ENCODE measurements at regions of chr16 and their contacts with region 1.

Region 1: GRCh38 chr16:25390761-25391160 is 133.1 kb upstream of the ZKSCAN2 start:
- DNase-seq: no peak
- ATAC-seq: no peak
- H3K4me3 ChIP-seq: no peak overlapping the region
- H3K27ac ChIP-seq: no peak overlapping the region
- H3K4me1 ChIP-seq: no peaks in the 10 kb centered on the region
- H3K27me3 ChIP-seq: no peaks in the 10 kb centered on the region
- CTCF ChIP-seq: no peak
- POLR2A ChIP-seq: no peak

Region 2: GRCh38 chr16:25443994-25444393 is 53.2 kb after region 1 on chr16:
- intact Hi-C with region 1: loop called in 1 of 10 experiments (anchors 10 kb)
- DNase-seq: no peak
- ATAC-seq: no peak
- H3K4me3 ChIP-seq: no peak overlapping the region
- H3K27ac ChIP-seq: no peak overlapping the region
- H3K4me1 ChIP-seq: no peaks in the 10 kb centered on the region
- H3K27me3 ChIP-seq: peaks cover 0 to 22% (median 0%) of the 10 kb centered on the region in 9 donors
- CTCF ChIP-seq: no peak
- POLR2A ChIP-seq: no peak

Region 3: GRCh38 chr16:25689137-25689836 is 298.5 kb after region 1 on chr16:
- intact Hi-C with region 1: no loop called
- DNase-seq: no peak
- ATAC-seq: no peak
- H3K4me3 ChIP-seq: no peak overlapping the region
- H3K27ac ChIP-seq: no peak overlapping the region
- H3K4me1 ChIP-seq: peaks cover 0 to 20% (median 0%) of the 10 kb centered on the region in 12 donors
- H3K27me3 ChIP-seq: peaks cover 12 to 50% (median 38%) of the 10 kb centered on the region in 9 donors
- CTCF ChIP-seq: no peak
- POLR2A ChIP-seq: no peak

Measured in heart left ventricle (tissue), 16 donors.